HEK293 (cell line): ENCODE measurements at regions of chr6 and their contacts with region 1.

Region 1: DNA sequence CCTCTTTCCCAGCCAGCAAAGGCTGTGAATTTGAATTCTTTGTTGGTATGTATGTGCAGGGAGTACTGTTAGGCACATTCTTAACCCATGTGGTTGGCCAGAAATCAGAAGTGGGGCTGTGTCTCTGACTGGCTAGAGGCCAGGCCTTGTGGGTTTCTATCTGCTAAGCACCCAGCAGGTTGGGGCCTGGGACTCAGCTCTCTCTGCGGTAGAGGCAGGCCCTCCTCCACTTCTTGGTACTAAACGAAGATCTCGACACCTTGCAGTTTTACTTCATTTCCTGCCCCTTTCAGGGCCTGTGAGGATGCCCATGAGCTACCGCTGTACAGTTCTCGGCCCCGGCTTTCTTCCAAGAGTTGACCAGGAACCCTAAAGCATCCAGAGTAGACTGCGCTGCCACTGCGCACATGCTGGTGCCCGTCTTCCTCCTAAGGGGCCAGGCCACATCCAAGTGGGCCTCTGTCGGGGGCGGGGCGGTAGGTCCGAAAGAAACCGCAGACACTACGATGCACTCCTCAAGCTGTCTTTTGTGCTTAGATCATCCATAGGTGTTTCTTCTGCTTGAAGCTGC is 51.1 kb downstream of the TCP11 start:
- H3K4me3 ChIP-seq: no peak overlapping the region
- H3K27ac ChIP-seq: no peak overlapping the region
- H3K4me1 ChIP-seq: no peaks in the 10 kb centered on the region
- CTCF ChIP-seq: no peak

Region 2: DNA sequence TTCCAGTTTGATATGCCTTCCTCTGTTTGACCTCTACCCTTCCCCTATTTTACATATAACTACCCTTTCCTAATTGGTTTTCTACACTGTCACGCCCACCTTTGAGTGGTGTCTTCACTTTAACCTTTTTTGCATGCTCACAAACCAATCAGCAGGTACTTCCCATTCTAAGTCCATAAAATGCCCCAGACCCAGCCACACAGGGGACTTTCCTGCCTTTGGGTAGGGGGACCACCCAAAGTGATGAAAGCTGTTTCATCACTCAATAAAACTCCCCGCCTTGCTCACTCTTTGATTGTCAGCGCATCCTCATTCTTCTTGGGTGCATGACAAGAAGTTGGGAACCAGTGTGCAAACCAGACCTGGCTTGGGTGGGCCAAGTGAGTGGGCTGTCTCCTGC is 353.2 kb before region 1 on chr6:
- CTCF ChIA-PET with region 1: no interaction called
- POLR2A ChIA-PET with region 1: no interaction called
- H3K4me3 ChIP-seq: no peak overlapping the region
- H3K27ac ChIP-seq: no peak overlapping the region
- H3K4me1 ChIP-seq: no peaks in the 10 kb centered on the region
- CTCF ChIP-seq: no peak

Region 3: DNA sequence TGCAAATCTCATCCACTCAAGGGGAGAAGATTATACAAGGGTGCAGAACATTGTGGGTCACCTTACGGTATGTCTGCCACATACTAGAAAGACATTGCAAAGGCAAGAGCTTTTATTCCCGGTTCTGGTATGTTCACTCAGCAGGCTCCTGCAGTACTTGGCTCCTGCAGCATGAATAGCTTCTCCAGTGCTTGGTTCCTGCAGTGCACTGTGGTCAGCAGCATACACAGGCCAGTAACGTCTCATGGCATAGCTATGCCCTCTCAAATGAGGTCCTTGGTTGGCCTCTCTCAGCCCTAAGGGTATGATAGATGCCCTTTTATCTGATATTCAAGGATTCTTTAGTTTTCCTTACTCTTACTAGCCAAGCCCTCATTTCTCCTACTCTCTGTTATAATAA is 38.5 kb after region 1 on chr6:
- CTCF ChIA-PET with region 1: interaction called, 6 read pairs
- POLR2A ChIA-PET with region 1: interaction called, 10 read pairs
- H3K4me3 ChIP-seq: no peak overlapping the region
- H3K27ac ChIP-seq: no peak overlapping the region
- H3K4me1 ChIP-seq: no peaks in the 10 kb centered on the region
- CTCF ChIP-seq: no peak

Region 4: GRCh38 chr6:35230950-35231349 is 140.9 kb after region 1 on chr6:
- CTCF ChIA-PET with region 1: no interaction called
- POLR2A ChIA-PET with region 1: no interaction called
- H3K4me3 ChIP-seq: no peak overlapping the region
- H3K27ac ChIP-seq: no peak overlapping the region
- H3K4me1 ChIP-seq: peaks cover 9% of the 10 kb centered on the region; the same call in 1 of the 2 replicates
- CTCF ChIP-seq: no peak